CD4-positive, alpha-beta T cell (primary cell): ENCODE measurements at regions of chr5 and their contacts with region 1.

Region 1: GRCh38 chr5:14581333-14581890 is at the start of gene OTULINL:
- DNase-seq: peak; percentile 79 to 92 (median 86)
- ATAC-seq: peak; percentile 81
- H3K4me3 ChIP-seq: peak within 1 kb of the TSS; percentile 69
- H3K4me3 Mint-ChIP-seq: peak within 1 kb of the TSS; percentile 90
- H3K27ac ChIP-seq: peak within 1 kb of the TSS; percentile 67 to 79
- H3K27ac Mint-ChIP-seq: peak within 1 kb of the TSS; percentile 93
- H3K4me1 ChIP-seq: peaks cover 34% of the 10 kb centered on the region
- H3K4me1 Mint-ChIP-seq: peaks cover 44% of the 10 kb centered on the region
- H3K27me3 ChIP-seq: no peaks in the 10 kb centered on the region
- H3K27me3 Mint-ChIP-seq: no peaks in the 10 kb centered on the region
- CTCF ChIP-seq: no peak
- total RNA-seq, gene OTULINL: 55.6 to 60.9 TPM

Region 2: GRCh38 chr5:14399054-14399692 is 182.2 kb before region 1 on chr5:
- CTCF ChIA-PET with region 1: interaction called, 4 read pairs
- POLR2A ChIA-PET with region 1: interaction called, 4 read pairs
- intact Hi-C with region 1: loop called (anchors 1 to 5 kb)
- DNase-seq: peak in 4 of 14 experiments; percentile 51 to 73 (median 60)
- ATAC-seq: peak; percentile 57
- H3K4me3 ChIP-seq: no peak overlapping the region
- H3K4me3 Mint-ChIP-seq: no peak overlapping the region
- H3K27ac ChIP-seq: no peak overlapping the region
- H3K27ac Mint-ChIP-seq: no peak overlapping the region
- H3K4me1 ChIP-seq: no peaks in the 10 kb centered on the region
- H3K4me1 Mint-ChIP-seq: peaks cover 15% of the 10 kb centered on the region
- H3K27me3 ChIP-seq: no peaks in the 10 kb centered on the region
- H3K27me3 Mint-ChIP-seq: no peaks in the 10 kb centered on the region
- CTCF ChIP-seq: peak; percentile 77

Region 3: GRCh38 chr5:14560091-14560595 is 21.3 kb before region 1 on chr5:
- CTCF ChIA-PET with region 1: no interaction called
- POLR2A ChIA-PET with region 1: interaction called, 13 read pairs
- intact Hi-C with region 1: no loop called
- DNase-seq: peak in 5 of 14 experiments; percentile 2 to 26 (median 23)
- ATAC-seq: peak; percentile 71
- H3K4me3 ChIP-seq: no peak overlapping the region
- H3K4me3 Mint-ChIP-seq: peak overlapping the region; percentile 81
- H3K27ac ChIP-seq: peak overlapping the region in 1 of 2 donors; percentile 30
- H3K27ac Mint-ChIP-seq: peak overlapping the region; percentile 57
- H3K4me1 ChIP-seq: peaks cover 20% of the 10 kb centered on the region
- H3K4me1 Mint-ChIP-seq: peaks cover 18% of the 10 kb centered on the region
- H3K27me3 ChIP-seq: no peaks in the 10 kb centered on the region
- H3K27me3 Mint-ChIP-seq: no peaks in the 10 kb centered on the region
- CTCF ChIP-seq: no peak

Region 4: DNA sequence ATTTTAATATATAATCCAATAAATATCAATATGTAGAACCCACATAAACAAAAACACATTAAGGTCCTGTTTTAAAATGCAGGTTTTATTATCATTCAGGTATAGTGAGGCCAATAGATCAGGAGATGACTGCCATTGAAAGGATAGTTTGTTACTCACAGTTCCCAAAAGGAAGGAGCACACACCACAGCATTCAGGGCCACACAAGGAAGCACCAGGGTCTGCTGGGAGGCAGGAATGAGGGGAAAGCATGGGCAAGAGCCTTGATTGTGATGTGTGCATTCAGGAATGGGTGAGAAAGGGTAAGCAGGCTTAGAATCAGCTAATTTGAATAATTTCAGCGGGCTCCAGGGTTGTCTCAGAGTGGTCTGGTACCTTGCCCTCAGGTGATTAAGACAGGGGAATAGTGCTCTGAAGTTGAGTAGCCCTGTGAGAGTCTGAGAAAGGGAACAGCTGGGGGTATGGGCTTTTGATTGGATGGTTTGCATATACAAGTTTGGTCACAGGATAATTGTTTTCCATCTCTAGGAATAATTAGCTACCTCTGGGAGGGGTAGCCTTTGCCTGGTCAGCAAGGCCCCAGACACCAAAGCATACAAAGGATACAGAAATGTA is 63.3 kb after region 1 on chr5:
- CTCF ChIA-PET with region 1: interaction called, 3 read pairs
- POLR2A ChIA-PET with region 1: interaction called, 12 read pairs
- intact Hi-C with region 1: no loop called
- DNase-seq: no peak
- ATAC-seq: no peak
- H3K4me3 ChIP-seq: no peak overlapping the region
- H3K4me3 Mint-ChIP-seq: no peak overlapping the region
- H3K27ac ChIP-seq: no peak overlapping the region
- H3K27ac Mint-ChIP-seq: no peak overlapping the region
- H3K4me1 ChIP-seq: no peaks in the 10 kb centered on the region
- H3K4me1 Mint-ChIP-seq: no peaks in the 10 kb centered on the region
- H3K27me3 ChIP-seq: peaks cover 3 to 5% of the 10 kb centered on the region in 2 experiments
- H3K27me3 Mint-ChIP-seq: peaks cover 35% of the 10 kb centered on the region
- CTCF ChIP-seq: no peak

Region 5: GRCh38 chr5:14678773-14679334 is 97.4 kb after region 1 on chr5:
- CTCF ChIA-PET with region 1: no interaction called
- POLR2A ChIA-PET with region 1: no interaction called
- intact Hi-C with region 1: no loop called
- DNase-seq: no peak
- ATAC-seq: no peak
- H3K4me3 ChIP-seq: no peak overlapping the region
- H3K4me3 Mint-ChIP-seq: no peak overlapping the region
- H3K27ac ChIP-seq: no peak overlapping the region
- H3K27ac Mint-ChIP-seq: peak overlapping the region; percentile 69
- H3K4me1 ChIP-seq: peaks cover 20% of the 10 kb centered on the region
- H3K4me1 Mint-ChIP-seq: peaks cover 44% of the 10 kb centered on the region
- H3K27me3 ChIP-seq: no peaks in the 10 kb centered on the region
- H3K27me3 Mint-ChIP-seq: no peaks in the 10 kb centered on the region
- CTCF ChIP-seq: no peak

Region 6: GRCh38 chr5:16465544-16466466 is 1884.4 kb after region 1 on chr5 and contains the start of gene ZNF622:
- CTCF ChIA-PET with region 1: no interaction called
- POLR2A ChIA-PET with region 1: no interaction called
- intact Hi-C with region 1: loop called in 1 of 2 experiments (anchors 10 kb)
- DNase-seq: peak; percentile 76 to 95 (median 85)
- ATAC-seq: peak; percentile 93
- H3K4me3 ChIP-seq: peak within 1 kb of the TSS; percentile 82
- H3K4me3 Mint-ChIP-seq: peak within 1 kb of the TSS; percentile 98
- H3K27ac ChIP-seq: peak within 1 kb of the TSS; percentile 63 to 79
- H3K27ac Mint-ChIP-seq: peak within 1 kb of the TSS; percentile 95
- H3K4me1 ChIP-seq: peaks cover 53% of the 10 kb centered on the region
- H3K4me1 Mint-ChIP-seq: peaks cover 96% of the 10 kb centered on the region
- H3K27me3 ChIP-seq: no peaks in the 10 kb centered on the region
- H3K27me3 Mint-ChIP-seq: no peaks in the 10 kb centered on the region
- CTCF ChIP-seq: no peak
- total RNA-seq, gene ZNF622: 52.5 to 54.1 TPM